Body of pancreas (tissue), 4 donors: ENCODE measurements at regions of chr4 and their contacts with region 1.

Region 1: DNA sequence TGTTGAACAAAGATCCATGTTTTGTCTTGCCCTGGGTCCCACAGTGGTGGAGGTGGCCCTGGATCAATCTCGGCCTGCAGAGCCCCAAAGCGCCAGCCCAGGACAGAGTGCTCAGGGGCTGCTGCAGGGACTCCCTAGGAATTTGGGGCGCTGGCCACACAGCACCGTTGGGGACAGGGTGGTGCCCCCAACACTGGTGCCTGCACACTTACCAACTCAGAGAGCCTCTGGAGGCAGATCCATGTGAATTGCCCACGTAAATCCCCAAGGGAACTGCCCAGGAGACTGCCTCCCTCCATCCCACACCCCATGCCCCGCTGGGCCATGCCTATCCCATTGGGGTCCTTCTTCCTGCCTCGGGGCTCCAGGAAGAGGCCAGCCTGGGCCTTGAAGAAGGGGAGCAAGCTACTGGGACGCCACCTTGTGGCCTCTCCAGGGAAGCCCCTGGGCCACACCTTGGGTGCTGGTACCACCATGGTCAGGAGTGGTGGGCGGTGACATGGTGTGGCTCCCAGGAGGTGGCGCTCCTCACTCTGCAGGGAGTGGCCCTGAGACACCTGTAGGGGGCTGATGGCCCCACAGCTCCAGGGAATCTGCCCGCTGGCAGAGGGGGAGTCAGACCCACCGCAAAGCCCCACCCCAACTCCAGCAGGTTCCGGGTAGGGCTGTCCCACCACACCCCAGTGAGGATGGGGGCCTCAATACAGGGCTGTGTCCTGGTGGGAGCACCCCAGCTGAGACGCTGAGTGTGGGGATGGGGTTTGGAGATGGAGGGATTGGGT is 22.8 kb downstream of the CFAP99 start:
- DNase-seq: peak; percentile 58 to 81 (median 72)
- ATAC-seq: peak; percentile 70
- H3K4me3 ChIP-seq: no peak overlapping the region
- H3K27ac ChIP-seq: no peak overlapping the region
- H3K4me1 ChIP-seq: peaks cover 4% of the 10 kb centered on the region
- H3K27me3 ChIP-seq: no peaks in the 10 kb centered on the region
- CTCF ChIP-seq: peak; percentile 50 to 81 (median 67)
- POLR2A ChIP-seq: no peak

Region 2: GRCh38 chr4:2217726-2218125 is 223.9 kb before region 1 on chr4:
- intact Hi-C with region 1: loop called (anchors 10 kb)
- DNase-seq: no peak
- ATAC-seq: no peak
- H3K4me3 ChIP-seq: no peak overlapping the region
- H3K27ac ChIP-seq: no peak overlapping the region
- H3K4me1 ChIP-seq: peaks cover 6% of the 10 kb centered on the region
- H3K27me3 ChIP-seq: no peaks in the 10 kb centered on the region
- CTCF ChIP-seq: no peak
- POLR2A ChIP-seq: no peak

Region 3: GRCh38 chr4:2497931-2498330 is 56.3 kb after region 1 on chr4:
- intact Hi-C with region 1: no loop called
- DNase-seq: peak in 1 of 4 donors; percentile 54
- ATAC-seq: no peak
- H3K4me3 ChIP-seq: no peak overlapping the region
- H3K27ac ChIP-seq: no peak overlapping the region
- H3K4me1 ChIP-seq: peaks cover 12% of the 10 kb centered on the region
- H3K27me3 ChIP-seq: no peaks in the 10 kb centered on the region
- CTCF ChIP-seq: no peak
- POLR2A ChIP-seq: no peak